Mammary epithelial cell (primary cell): ENCODE measurements at regions of chr14 and their contacts with region 1.

Region 1: DNA sequence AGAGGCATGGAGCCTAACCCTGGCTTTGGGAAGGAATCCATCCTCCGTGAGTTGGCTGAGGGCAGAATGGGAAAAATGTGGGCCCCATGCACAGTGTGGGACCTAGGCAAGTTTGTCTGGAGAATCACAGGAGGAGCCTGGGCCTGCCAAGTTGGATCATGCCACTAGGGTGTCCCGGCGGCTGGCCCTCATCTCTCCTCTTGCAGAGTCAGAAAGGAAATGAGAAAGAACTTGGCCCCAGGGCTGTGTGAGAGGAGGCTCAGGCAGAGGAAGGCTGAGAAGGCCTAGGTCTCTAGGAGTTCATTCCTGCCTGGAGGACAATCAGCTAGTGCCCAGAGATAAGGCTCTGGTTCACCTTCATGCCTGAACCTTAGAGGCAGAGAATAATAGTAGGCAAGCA is 2.5 kb upstream of the ESRRB start:
- DNase-seq: no peak
- H3K4me3 ChIP-seq: no peak overlapping the region
- H3K27ac ChIP-seq: no peak overlapping the region
- H3K4me1 ChIP-seq: peaks cover 15% of the 10 kb centered on the region
- H3K27me3 ChIP-seq: peaks cover 19% of the 10 kb centered on the region
- CTCF ChIP-seq: peak in 1 of 2 donors; percentile 12

Region 2: DNA sequence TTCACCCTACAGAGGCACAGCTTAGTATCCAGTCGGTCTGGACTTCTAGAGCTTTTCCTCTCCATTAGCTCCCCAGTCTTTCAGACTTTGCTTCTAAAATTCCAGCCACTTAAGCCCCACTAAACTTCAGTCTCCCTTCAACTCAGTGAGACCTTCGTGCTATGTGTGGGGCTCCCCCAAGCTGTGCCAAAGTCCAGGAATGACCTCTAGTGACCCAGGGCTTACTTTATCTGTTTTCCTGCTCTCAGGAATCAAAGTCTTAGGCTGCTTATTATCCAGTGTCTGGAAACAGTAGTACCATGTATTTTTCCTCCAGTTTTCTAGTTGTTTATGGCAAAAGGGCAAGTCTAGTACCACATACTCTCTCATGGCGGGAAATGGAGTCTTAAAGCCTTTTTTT is 310.1 kb before region 1 on chr14:
- CTCF ChIA-PET with region 1: no interaction called
- dilution Hi-C with region 1: loop called (anchors 5 kb)
- in situ Hi-C with region 1: loop called in 1 of 2 experiments (anchors 25 kb)
- intact Hi-C with region 1: no loop called
- DNase-seq: no peak
- H3K4me3 ChIP-seq: no peak overlapping the region
- H3K27ac ChIP-seq: no peak overlapping the region
- H3K4me1 ChIP-seq: no peaks in the 10 kb centered on the region
- H3K27me3 ChIP-seq: no peaks in the 10 kb centered on the region
- CTCF ChIP-seq: no peak

Region 3: GRCh38 chr14:76236172-76237130 is 137.0 kb before region 1 on chr14:
- CTCF ChIA-PET with region 1: no interaction called
- dilution Hi-C with region 1: no loop called
- in situ Hi-C with region 1: no loop called
- intact Hi-C with region 1: no loop called
- DNase-seq: no peak
- H3K4me3 ChIP-seq: no peak overlapping the region
- H3K27ac ChIP-seq: no peak overlapping the region
- H3K4me1 ChIP-seq: no peaks in the 10 kb centered on the region
- H3K27me3 ChIP-seq: no peaks in the 10 kb centered on the region
- CTCF ChIP-seq: no peak

Region 4: DNA sequence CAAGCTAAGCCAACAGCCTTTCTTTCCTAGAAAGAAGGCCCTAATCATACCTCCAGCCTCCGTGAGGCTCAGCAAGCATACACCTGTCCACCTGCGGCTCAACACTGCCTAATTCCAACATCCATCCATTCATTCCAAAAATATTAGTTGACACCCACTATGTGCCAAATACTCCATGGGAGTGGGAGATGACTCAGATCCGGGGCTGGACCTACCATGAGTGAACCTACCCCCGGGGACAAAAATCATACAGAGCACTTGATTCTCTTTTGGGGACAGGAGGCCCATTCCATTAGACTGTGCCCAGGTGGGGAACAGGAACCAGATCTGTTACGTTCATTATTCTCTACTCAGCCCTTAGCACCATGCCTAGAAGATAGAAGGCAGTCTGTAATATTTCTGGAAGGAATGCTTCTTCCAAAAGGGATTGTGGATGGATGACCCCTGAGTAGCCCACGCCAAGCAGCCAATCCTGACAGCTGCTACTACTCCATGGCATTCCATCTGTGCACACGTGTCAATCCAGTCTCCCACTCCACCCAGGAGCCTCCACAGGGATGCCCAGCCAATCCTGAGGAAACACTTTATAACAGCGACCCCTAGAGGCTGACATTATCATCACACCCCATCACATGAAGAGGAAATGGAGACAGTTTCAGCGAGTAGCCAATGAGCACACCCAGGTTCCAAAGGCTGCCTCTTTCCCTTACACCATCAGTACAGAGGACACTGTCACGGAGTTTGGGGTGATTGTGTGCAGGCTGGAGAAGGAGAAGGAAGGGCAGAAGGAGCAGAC is 173.2 kb after region 1 on chr14:
- CTCF ChIA-PET with region 1: no interaction called
- dilution Hi-C with region 1: no loop called
- in situ Hi-C with region 1: no loop called
- intact Hi-C with region 1: no loop called
- DNase-seq: peak; percentile 61
- H3K4me3 ChIP-seq: no peak overlapping the region
- H3K27ac ChIP-seq: no peak overlapping the region
- H3K4me1 ChIP-seq: peaks cover 30% of the 10 kb centered on the region
- H3K27me3 ChIP-seq: no peaks in the 10 kb centered on the region
- CTCF ChIP-seq: peak; percentile 65 to 77